Naive thymus-derived CD4-positive, alpha-beta T cell (primary cell): ENCODE measurements at regions of chr12 and their contacts with region 1.

Region 1: DNA sequence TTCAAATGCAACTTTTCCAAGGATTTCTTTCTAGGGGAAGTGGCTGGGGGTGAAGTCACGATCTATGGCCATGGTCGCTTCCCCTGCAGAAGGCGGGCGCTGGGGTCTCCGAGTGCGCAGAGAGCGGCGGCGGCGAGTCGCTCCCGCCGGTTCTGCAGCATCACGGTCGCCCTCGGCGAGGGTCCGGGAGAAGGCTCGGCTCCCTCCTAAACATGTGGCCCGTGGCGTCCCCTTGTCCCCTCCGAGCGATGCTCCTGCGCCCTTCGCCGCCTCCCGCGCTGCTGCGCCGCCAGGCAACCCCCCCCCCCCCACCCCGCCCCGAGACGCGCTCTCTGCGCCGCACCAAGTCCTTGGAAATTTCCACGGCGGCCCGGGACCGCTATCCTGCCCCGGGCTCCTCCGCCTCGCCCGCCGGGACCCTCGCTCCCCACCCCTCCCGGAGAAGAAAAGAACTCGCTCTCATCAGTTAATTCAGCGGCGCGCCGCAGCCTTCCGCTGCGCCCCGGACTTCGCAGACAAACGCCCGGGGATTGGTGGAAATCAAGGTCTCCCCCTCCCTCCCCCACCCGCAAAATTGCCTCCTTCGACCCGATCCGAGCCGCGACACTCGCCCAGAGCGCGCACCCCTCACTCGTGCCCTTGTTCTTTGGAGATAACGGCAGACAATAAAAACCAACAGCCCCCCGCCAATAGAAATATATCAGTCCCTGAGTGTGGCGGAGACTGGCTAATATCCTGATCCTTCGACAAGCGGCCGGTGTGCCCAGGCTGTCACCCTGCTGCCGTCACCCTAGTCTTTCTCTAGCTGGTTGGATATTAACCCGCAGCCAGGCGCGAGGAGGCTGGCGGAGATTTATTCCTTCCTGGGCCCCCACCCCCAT is at the start of gene ST8SIA1:
- DNase-seq: peak in 8 of 9 donors; percentile 13 to 36 (median 30)
- ATAC-seq: peak; percentile 57
- H3K4me3 ChIP-seq: peak within 1 kb of the TSS; percentile 85
- H3K4me3 Mint-ChIP-seq: peak within 1 kb of the TSS; percentile 90 to 98 (median 93)
- H3K27ac ChIP-seq: no peak within 1 kb of the TSS
- H3K27ac Mint-ChIP-seq: peak within 1 kb of the TSS in 6 of 9 donors; percentile 28 to 87 (median 83)
- H3K4me1 ChIP-seq: peaks cover 0 to 22% of the 10 kb centered on the region in 2 donors
- H3K4me1 Mint-ChIP-seq: peaks cover 16 to 27% (median 18%) of the 10 kb centered on the region in 7 donors
- H3K27me3 ChIP-seq: peaks cover 0 to 5% of the 10 kb centered on the region in 2 donors
- H3K27me3 Mint-ChIP-seq: peaks cover 0 to 62% (median 25%) of the 10 kb centered on the region in 5 donors
- total RNA-seq, gene ST8SIA1: 0.53 to 6.0 (median 4.0) TPM

Region 2: DNA sequence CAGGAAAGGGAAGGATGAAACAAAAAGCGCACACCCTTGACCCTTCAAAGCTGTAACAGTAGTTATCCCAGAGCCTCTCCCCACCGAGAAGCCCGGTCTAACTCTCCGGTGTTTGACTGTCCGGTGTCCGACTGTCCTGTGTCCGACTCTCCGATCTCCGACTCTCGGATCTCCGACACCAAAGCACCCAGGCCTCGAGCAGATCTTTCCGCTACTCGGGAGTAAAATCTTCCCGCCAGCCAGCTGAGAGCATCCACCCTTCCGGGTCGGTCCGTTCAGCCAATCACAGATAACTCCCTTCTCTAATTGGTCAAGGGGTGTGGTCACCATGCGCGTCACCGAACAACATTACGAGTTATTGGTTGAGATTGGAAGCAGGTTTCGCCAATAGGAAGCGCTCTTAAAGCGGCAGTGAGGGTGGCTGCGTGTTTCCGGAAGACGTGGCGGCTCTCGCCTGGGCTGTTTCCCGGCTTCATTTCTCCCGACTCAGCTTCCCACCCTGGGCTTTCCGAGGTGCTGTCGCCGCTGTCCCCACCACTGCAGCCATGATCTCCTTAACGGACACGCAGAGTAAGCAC is 833.2 kb before region 1 on chr12 and contains the starts of genes GOLT1B and RECQL:
- CTCF ChIA-PET with region 1: no interaction called
- POLR2A ChIA-PET with region 1: no interaction called
- intact Hi-C with region 1: loop called in 1 of 2 experiments (anchors 5 kb)
- DNase-seq: peak; percentile 67 to 96 (median 94)
- ATAC-seq: peak; percentile 98
- H3K4me3 ChIP-seq: peak within 1 kb of the TSS; percentile 68
- H3K4me3 Mint-ChIP-seq: no peak within 1 kb of the TSS
- H3K27ac ChIP-seq: peak within 1 kb of the TSS; percentile 87
- H3K27ac Mint-ChIP-seq: no peak within 1 kb of the TSS
- H3K4me1 ChIP-seq: peaks cover 20 to 25% of the 10 kb centered on the region in 2 donors
- H3K4me1 Mint-ChIP-seq: peaks cover 30 to 67% (median 55%) of the 10 kb centered on the region in 7 donors
- H3K27me3 ChIP-seq: no peaks in the 10 kb centered on the region
- H3K27me3 Mint-ChIP-seq: no peaks in the 10 kb centered on the region
- total RNA-seq, gene GOLT1B: 25.8 to 42.5 (median 31.7) TPM
- total RNA-seq, gene RECQL: 19.4 to 77.7 (median 43.2) TPM

Region 3: DNA sequence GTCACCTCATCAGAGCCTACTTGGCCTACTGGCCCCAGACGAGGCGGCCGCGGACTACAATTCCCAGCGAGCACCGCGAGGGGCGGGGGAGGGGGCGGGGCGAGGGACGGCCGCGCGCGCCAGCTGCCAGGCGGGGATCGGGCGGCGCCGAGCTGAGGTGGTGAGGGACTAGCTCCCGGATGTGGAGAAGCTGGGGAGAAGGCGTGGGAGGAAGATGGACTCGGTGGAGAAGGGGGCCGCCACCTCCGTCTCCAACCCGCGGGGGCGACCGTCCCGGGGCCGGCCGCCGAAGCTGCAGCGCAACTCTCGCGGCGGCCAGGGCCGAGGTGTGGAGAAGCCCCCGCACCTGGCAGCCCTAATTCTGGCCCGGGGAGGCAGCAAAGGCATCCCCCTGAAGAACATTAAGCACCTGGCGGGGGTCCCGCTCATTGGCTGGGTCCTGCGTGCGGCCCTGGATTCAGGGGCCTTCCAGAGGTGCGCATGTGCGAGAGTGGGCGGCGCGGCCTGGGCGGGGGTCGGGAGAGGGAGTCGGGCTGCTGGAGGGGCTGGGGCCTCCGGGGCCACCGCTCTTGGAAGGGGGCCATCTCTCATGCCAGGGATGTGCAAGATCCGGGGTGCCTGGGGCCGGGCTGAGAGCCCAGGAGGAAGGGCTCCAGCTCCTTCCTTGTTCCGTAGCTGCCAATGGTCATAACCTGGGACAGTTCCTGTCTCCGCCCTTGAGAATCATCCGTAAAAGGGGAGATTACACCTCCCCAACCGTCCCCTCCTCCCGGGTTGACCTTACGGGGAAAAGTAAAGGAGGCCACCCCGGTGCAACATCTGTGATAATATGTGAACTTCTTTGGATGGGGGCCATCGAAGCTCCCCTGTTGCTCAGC is 288.3 kb before region 1 on chr12 and contains the start of gene CMAS:
- CTCF ChIA-PET with region 1: no interaction called
- POLR2A ChIA-PET with region 1: no interaction called
- intact Hi-C with region 1: loop called in 1 of 2 experiments (anchors 1 kb)
- DNase-seq: peak; percentile 49 to 76 (median 65)
- ATAC-seq: peak; percentile 93
- H3K4me3 ChIP-seq: peak within 1 kb of the TSS; percentile 82
- H3K4me3 Mint-ChIP-seq: peak within 1 kb of the TSS; percentile 80 to 99 (median 94)
- H3K27ac ChIP-seq: peak within 1 kb of the TSS; percentile 82
- H3K27ac Mint-ChIP-seq: peak within 1 kb of the TSS; percentile 35 to 95 (median 89)
- H3K4me1 ChIP-seq: peaks cover 10 to 15% of the 10 kb centered on the region in 2 donors
- H3K4me1 Mint-ChIP-seq: peaks cover 27 to 65% (median 48%) of the 10 kb centered on the region in 7 donors
- H3K27me3 ChIP-seq: no peaks in the 10 kb centered on the region
- H3K27me3 Mint-ChIP-seq: no peaks in the 10 kb centered on the region
- total RNA-seq, gene CMAS: 10.1 to 33.6 (median 19.4) TPM

Region 4: GRCh38 chr12:22100958-22101748 is 233.5 kb before region 1 on chr12:
- CTCF ChIA-PET with region 1: interaction called, 3 read pairs
- POLR2A ChIA-PET with region 1: no interaction called
- intact Hi-C with region 1: loop called (anchors 1 kb)
- DNase-seq: peak in 6 of 9 donors; percentile 12 to 47 (median 40)
- ATAC-seq: peak; percentile 78
- H3K4me3 ChIP-seq: no peak overlapping the region
- H3K4me3 Mint-ChIP-seq: no peak overlapping the region
- H3K27ac ChIP-seq: no peak overlapping the region
- H3K27ac Mint-ChIP-seq: no peak overlapping the region
- H3K4me1 ChIP-seq: peaks cover 0 to 4% of the 10 kb centered on the region in 2 donors
- H3K4me1 Mint-ChIP-seq: peaks cover 0 to 15% (median 6%) of the 10 kb centered on the region in 7 donors
- H3K27me3 ChIP-seq: no peaks in the 10 kb centered on the region
- H3K27me3 Mint-ChIP-seq: peaks cover 0 to 25% (median 0%) of the 10 kb centered on the region in 5 donors

Region 5: GRCh38 chr12:22164139-22164538 is 170.5 kb before region 1 on chr12:
- CTCF ChIA-PET with region 1: no interaction called
- POLR2A ChIA-PET with region 1: no interaction called
- intact Hi-C with region 1: loop called in 1 of 2 experiments (anchors 5 kb)
- DNase-seq: peak in 6 of 9 donors; percentile 20 to 43 (median 34)
- ATAC-seq: peak; percentile 75
- H3K4me3 ChIP-seq: peak overlapping the region; percentile 17
- H3K4me3 Mint-ChIP-seq: peak overlapping the region; percentile 20 to 77 (median 60)
- H3K27ac ChIP-seq: peak overlapping the region; percentile 23
- H3K27ac Mint-ChIP-seq: peak overlapping the region; percentile 21 to 86 (median 68)
- H3K4me1 ChIP-seq: peaks cover 22 to 38% of the 10 kb centered on the region in 2 donors
- H3K4me1 Mint-ChIP-seq: peaks cover 21 to 63% (median 60%) of the 10 kb centered on the region in 7 donors
- H3K27me3 ChIP-seq: no peaks in the 10 kb centered on the region
- H3K27me3 Mint-ChIP-seq: no peaks in the 10 kb centered on the region

Region 6: DNA sequence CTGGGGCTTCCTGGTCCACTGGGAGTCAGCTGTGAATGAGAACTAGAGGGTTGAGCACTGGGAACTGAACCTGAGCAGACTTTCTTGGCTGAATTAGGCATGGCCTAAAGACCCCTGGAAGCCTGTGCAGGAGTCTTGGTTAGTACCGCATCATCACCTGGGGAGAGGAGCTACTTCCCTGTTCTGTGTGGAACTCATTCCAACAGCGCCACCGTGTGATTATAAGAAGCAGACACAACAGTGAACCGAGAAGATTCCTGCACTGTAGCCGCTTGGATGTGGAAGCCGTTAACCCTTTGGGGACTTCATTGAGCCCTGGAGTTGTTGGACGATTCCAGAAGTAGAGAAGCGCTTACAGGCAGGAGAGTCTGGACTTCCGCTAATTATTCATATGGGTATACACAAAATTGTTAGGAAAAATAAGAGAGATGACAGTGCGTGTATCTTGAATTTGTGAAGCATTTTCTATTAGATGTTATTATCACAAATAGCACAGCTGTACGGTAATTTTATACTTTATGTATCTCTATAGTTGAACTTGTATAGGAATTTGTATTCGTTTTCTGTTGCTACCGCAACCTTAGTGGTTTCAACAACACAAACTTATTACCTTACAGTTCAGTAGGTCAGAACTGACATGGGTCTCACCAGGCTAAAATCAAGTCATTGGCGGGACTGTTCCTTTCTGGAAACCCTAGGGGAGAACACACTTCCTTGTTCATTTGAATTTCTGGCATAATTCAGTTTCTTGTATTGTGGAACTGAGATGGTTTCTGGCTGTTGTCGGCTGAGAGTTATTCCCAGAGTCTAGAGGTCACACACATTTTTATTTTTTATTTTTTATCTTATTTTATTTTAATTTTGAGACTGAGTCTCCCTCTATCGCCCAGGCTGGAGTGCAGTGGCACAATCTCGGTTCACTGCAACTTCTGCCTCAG is 109.0 kb after region 1 on chr12:
- CTCF ChIA-PET with region 1: interaction called, 3 read pairs
- POLR2A ChIA-PET with region 1: no interaction called
- intact Hi-C with region 1: loop called (anchors 1 to 5 kb)
- DNase-seq: peak; percentile 22 to 66 (median 58)
- ATAC-seq: peak; percentile 100
- H3K4me3 ChIP-seq: no peak overlapping the region
- H3K4me3 Mint-ChIP-seq: no peak overlapping the region
- H3K27ac ChIP-seq: no peak overlapping the region
- H3K27ac Mint-ChIP-seq: no peak overlapping the region
- H3K4me1 ChIP-seq: peaks cover 0 to 4% of the 10 kb centered on the region in 2 donors
- H3K4me1 Mint-ChIP-seq: peaks cover 0 to 10% (median 3%) of the 10 kb centered on the region in 7 donors
- H3K27me3 ChIP-seq: no peaks in the 10 kb centered on the region
- H3K27me3 Mint-ChIP-seq: peaks cover 0 to 6% (median 0%) of the 10 kb centered on the region in 5 donors

Region 7: GRCh38 chr12:22544038-22544979 is 209.7 kb after region 1 on chr12 and contains the start of gene C2CD5:
- CTCF ChIA-PET with region 1: no interaction called
- POLR2A ChIA-PET with region 1: no interaction called
- intact Hi-C with region 1: loop called (anchors 1 to 2 kb)
- DNase-seq: peak; percentile 84 to 96 (median 96)
- ATAC-seq: peak; percentile 96
- H3K4me3 ChIP-seq: peak within 1 kb of the TSS; percentile 95
- H3K4me3 Mint-ChIP-seq: peak within 1 kb of the TSS; percentile 91 to 98 (median 92)
- H3K27ac ChIP-seq: peak within 1 kb of the TSS; percentile 79
- H3K27ac Mint-ChIP-seq: peak within 1 kb of the TSS; percentile 94 to 98 (median 95)
- H3K4me1 ChIP-seq: peaks cover 7 to 18% of the 10 kb centered on the region in 2 donors
- H3K4me1 Mint-ChIP-seq: peaks cover 32 to 47% (median 38%) of the 10 kb centered on the region in 7 donors
- H3K27me3 ChIP-seq: no peaks in the 10 kb centered on the region
- H3K27me3 Mint-ChIP-seq: peaks cover 0 to 12% (median 4%) of the 10 kb centered on the region in 5 donors
- total RNA-seq, gene C2CD5: 31.5 to 58.9 (median 47.1) TPM